ENCODE measurements at regions of chr9 and their contacts with region 1.

Region 1: GRCh38 chr9:118536153-118536552 is 832.0 kb downstream of the TLR4 start:
- DNase-seq: no peak
- H3K4me3 ChIP-seq: no peak overlapping the region
- H3K27ac ChIP-seq: no peak overlapping the region
- H3K4me1 ChIP-seq: no peaks in the 10 kb centered on the region
- H3K27me3 ChIP-seq: no peaks in the 10 kb centered on the region
- CTCF ChIP-seq: no peak
- POLR2A ChIP-seq: no peak

Region 2: GRCh38 chr9:118364266-118365106 is 171.7 kb before region 1 on chr9:
- intact Hi-C with region 1: no loop called
- DNase-seq: no peak
- H3K4me3 ChIP-seq: no peak overlapping the region
- H3K27ac ChIP-seq: no peak overlapping the region
- H3K4me1 ChIP-seq: no peaks in the 10 kb centered on the region
- H3K27me3 ChIP-seq: no peaks in the 10 kb centered on the region
- CTCF ChIP-seq: no peak
- POLR2A ChIP-seq: no peak

Region 3: GRCh38 chr9:119722384-119722783 is 1186.2 kb after region 1 on chr9:
- intact Hi-C with region 1: loop called (anchors 5 kb)
- DNase-seq: no peak
- H3K4me3 ChIP-seq: no peak overlapping the region
- H3K27ac ChIP-seq: no peak overlapping the region
- H3K4me1 ChIP-seq: no peaks in the 10 kb centered on the region
- H3K27me3 ChIP-seq: no peaks in the 10 kb centered on the region
- CTCF ChIP-seq: no peak
- POLR2A ChIP-seq: no peak